ENCODE measurements at regions of chr19 and their contacts with region 1.

Region 1: GRCh38 chr19:20423381-20424197 is 142.0 kb downstream of the ZNF737 start:
- DNase-seq: peak in 1 of 2 experiments; percentile 61
- H3K4me3 ChIP-seq: peak overlapping the region; percentile 86 to 100 (median 100)
- H3K27ac ChIP-seq: peak overlapping the region; percentile 100
- H3K4me1 ChIP-seq: no peaks in the 10 kb centered on the region
- H3K27me3 ChIP-seq: no peaks in the 10 kb centered on the region
- CTCF ChIP-seq: no peak
- EP300 ChIP-seq: no peak
- POLR2A ChIP-seq: no peak; a peak in 2 of 3 replicates
- RAD21 ChIP-seq: no peak

Region 2: DNA sequence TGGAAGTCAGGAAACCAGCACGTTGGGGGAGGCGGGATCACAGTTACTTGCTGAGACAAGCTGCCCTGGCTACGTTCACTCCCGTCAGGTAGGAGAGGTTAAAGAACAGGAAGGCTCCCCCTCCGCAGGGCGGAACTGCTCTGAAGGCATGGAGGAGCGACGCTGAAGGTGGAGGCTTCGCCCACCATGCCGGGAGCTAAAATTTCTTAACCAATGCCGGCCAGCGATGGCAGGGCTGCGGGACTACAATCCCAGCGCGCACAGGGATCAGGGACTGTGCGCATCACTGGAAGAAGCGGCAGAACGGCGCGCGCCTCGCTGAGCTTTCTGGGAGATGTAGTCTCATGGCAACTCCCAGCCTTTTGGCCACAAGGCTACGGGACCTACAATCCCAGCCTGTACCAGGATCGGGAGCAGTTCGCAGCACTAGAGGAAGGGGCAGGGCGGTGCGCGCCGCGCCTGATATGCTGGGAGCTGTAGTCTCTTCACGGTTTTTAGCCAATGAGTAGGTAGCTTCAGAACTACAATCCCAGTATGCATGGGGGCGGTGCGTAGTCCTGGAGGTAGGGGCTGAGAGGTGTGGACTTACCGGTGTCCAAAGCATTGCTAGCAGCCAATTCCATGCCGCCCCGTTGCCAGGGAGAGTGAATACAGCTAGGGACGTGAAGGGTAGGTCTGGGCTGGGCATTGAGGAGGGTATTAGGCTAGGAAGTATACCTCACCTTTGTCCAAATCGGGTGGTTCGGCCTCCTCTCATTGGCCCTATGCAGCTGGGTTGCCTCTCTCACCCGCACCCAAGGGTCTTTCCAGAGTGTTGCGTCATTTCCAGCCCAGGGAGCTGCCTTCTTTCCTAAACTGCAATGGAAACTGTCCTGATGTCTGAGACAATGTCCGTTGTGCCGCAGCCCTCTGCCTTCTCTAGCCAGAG is 371.5 kb before region 1 on chr19:
- CTCF ChIA-PET with region 1: no interaction called
- POLR2A ChIA-PET with region 1: interaction called, 10 read pairs
- DNase-seq: peak; percentile 91 to 100
- H3K4me3 ChIP-seq: peak overlapping the region; percentile 76 to 87 (median 82)
- H3K27ac ChIP-seq: peak overlapping the region; percentile 87
- H3K4me1 ChIP-seq: peaks cover 0 to 3% (median 0%) of the 10 kb centered on the region in 4 experiments; a peak in 1 of 7 replicates
- H3K27me3 ChIP-seq: no peaks in the 10 kb centered on the region
- CTCF ChIP-seq: peak; percentile 8 to 19 (median 19); a peak in 2 of 4 replicates
- EP300 ChIP-seq: no peak
- POLR2A ChIP-seq: peak; percentile 66 to 78
- RAD21 ChIP-seq: peak; percentile 1 to 2; a peak in 2 of 4 replicates

Region 3: DNA sequence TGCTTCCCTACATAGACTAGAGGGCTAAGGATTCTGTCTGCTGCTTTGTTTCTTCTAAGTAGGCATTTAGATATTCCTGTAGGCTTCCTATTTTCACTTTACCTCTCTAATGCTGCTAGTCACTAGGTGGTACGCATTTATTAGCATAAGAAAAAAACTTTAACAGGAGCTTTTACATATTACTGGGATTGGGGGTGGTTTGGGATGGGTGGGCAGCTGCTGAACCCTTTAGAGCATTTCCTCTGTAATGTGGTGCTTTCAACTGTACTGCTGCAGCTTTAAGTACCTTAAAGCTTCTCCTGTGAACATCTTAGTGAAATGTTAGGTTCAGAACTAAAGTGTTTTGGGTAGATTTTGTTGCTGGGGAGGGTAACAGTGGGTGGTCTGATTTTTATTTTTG is 164.0 kb before region 1 on chr19:
- CTCF ChIA-PET with region 1: no interaction called
- POLR2A ChIA-PET with region 1: interaction called, 11 read pairs
- DNase-seq: peak; percentile 46 to 72
- H3K4me3 ChIP-seq: peak overlapping the region in 1 of 4 experiments; percentile 29; a peak in 1 of 8 replicates
- H3K27ac ChIP-seq: peak overlapping the region; percentile 57; the same call in 1 of the 2 replicates
- H3K4me1 ChIP-seq: peaks cover 0 to 18% (median 13%) of the 10 kb centered on the region in 4 experiments
- H3K27me3 ChIP-seq: no peaks in the 10 kb centered on the region
- CTCF ChIP-seq: no peak
- EP300 ChIP-seq: no peak
- POLR2A ChIP-seq: no peak
- RAD21 ChIP-seq: no peak

Region 4: DNA sequence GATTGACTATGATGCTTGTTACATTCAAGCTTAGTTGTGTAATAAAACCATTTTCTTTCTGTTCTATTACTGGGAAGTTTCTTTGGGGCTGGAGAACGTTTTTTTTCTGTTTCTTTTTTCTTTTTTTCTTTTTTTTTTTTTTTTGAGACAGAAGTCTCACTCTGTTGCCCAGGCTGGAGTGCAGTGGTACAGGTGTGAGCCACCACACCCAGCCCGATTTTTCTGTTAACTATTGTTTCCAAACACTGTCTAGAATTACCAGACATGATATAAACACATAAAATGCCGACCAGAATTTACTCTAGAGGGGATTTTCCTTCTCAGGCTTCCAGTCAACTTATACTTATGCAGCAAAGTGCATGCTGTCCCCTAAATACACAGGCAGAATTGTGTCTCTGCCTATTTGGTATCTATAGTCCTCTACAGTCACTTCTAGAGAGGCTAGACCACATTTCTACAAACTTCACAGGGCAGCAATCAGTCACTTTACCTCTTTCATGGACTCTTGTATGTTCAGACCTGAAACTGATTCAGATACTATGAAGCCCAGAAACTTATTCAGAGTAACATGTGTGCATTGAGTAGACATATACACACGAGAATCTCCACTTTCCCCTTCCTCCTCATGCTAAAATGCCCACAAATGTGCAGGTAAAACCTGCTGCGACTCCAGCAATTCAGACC is 20.8 kb after region 1 on chr19:
- CTCF ChIA-PET with region 1: no interaction called
- POLR2A ChIA-PET with region 1: interaction called, 33 read pairs
- DNase-seq: no peak
- H3K4me3 ChIP-seq: no peak overlapping the region
- H3K27ac ChIP-seq: no peak overlapping the region
- H3K4me1 ChIP-seq: no peaks in the 10 kb centered on the region
- H3K27me3 ChIP-seq: no peaks in the 10 kb centered on the region
- CTCF ChIP-seq: no peak
- EP300 ChIP-seq: no peak
- POLR2A ChIP-seq: no peak
- RAD21 ChIP-seq: no peak

Region 5: DNA sequence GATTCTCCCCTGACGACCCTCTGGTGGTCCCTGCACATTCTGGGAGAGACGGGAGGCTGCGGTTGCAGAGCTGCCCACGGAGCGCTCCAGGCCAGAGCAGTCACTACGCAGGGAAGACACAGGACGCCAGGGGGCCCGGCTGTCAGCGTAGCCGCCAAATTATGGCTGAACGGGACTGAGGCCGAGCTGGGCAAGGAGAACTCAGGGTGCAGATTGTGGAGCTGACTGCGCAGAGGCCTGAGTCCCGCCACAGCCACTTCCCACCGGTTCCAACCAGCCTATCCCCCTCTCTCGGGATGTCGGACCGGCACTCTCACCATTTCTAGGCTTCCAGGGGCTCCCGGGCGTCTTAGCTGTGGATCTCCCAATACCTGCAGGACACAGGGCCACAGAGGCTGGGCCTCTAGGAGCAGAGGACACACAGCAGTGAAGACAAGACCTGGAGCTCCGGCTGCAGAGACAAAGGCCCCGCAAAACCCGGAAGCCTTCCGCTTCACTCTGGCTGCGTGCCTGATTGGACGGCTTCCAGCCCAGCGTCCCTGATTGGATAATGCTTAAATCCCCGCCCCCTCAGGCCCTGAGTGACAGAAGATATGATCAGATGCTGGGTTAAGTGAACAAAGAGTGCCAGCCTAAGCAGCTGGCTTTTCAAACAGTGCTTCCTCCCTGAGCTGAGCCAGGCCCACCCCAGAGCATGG is 141.9 kb after region 1 on chr19 and contains the start of gene ZNF737:
- CTCF ChIA-PET with region 1: interaction called, 3 read pairs
- POLR2A ChIA-PET with region 1: interaction called, 27 read pairs
- DNase-seq: peak; percentile 87 to 90
- H3K4me3 ChIP-seq: peak within 1 kb of the TSS; percentile 82 to 94 (median 86)
- H3K27ac ChIP-seq: peak within 1 kb of the TSS; percentile 93
- H3K4me1 ChIP-seq: no peaks in the 10 kb centered on the region; a peak in 1 of 7 replicates
- H3K27me3 ChIP-seq: no peaks in the 10 kb centered on the region
- CTCF ChIP-seq: peak in 1 of 3 experiments; percentile 16; a peak in 1 of 4 replicates
- EP300 ChIP-seq: no peak
- POLR2A ChIP-seq: peak; percentile 71 to 85
- RAD21 ChIP-seq: peak; percentile 17 to 28; a peak in 2 of 4 replicates
- total RNA-seq, gene ZNF737: 17.1 and 19.7 TPM in 2 replicates

Measured in H1 (cell line).